OCI-LY7 (cell line): ENCODE measurements at regions of chr12 and their contacts with region 1.

Region 1: GRCh38 chr12:82645414-82645813 is 41.3 kb upstream of the TMTC2 start:
- DNase-seq: no peak
- H3K4me3 ChIP-seq: no peak overlapping the region
- H3K27ac ChIP-seq: no peak overlapping the region
- H3K4me1 ChIP-seq: no peaks in the 10 kb centered on the region
- CTCF ChIP-seq: no peak

Region 2: GRCh38 chr12:82619644-82620043 is 25.8 kb before region 1 on chr12:
- CTCF ChIA-PET with region 1: no interaction called
- POLR2A ChIA-PET with region 1: interaction called, 11 read pairs
- intact Hi-C with region 1: no loop called
- DNase-seq: no peak
- H3K4me3 ChIP-seq: no peak overlapping the region
- H3K27ac ChIP-seq: no peak overlapping the region
- H3K4me1 ChIP-seq: no peaks in the 10 kb centered on the region
- CTCF ChIP-seq: no peak